Pancreas (tissue), 10 donors: ENCODE measurements at regions of chr9 and their contacts with region 1.

Region 1: GRCh38 chr9:76458903-76459690 is at the start of gene GCNT1:
- DNase-seq: peak; percentile 88 to 98 (median 92)
- ATAC-seq: peak; percentile 94 to 98 (median 96)
- H3K4me3 ChIP-seq: peak within 1 kb of the TSS; percentile 52 to 90 (median 74)
- H3K27ac ChIP-seq: peak within 1 kb of the TSS in 2 of 4 donors; percentile 48 to 56
- H3K4me1 ChIP-seq: peaks cover 4 to 23% (median 6%) of the 10 kb centered on the region in 3 donors
- H3K27me3 ChIP-seq: no peaks in the 10 kb centered on the region
- CTCF ChIP-seq: peak in 2 of 4 donors; percentile 20 to 23
- total RNA-seq, gene GCNT1: 1.7 to 5.7 (median 3.3) TPM

Region 2: GRCh38 chr9:76311586-76311985 is 147.5 kb before region 1 on chr9:
- intact Hi-C with region 1: no loop called
- DNase-seq: no peak
- ATAC-seq: peak in 2 of 4 donors; percentile 43 to 76
- H3K4me3 ChIP-seq: no peak overlapping the region
- H3K27ac ChIP-seq: peak overlapping the region in 1 of 4 donors; percentile 25
- H3K4me1 ChIP-seq: no peaks in the 10 kb centered on the region
- H3K27me3 ChIP-seq: no peaks in the 10 kb centered on the region
- CTCF ChIP-seq: no peak

Region 3: DNA sequence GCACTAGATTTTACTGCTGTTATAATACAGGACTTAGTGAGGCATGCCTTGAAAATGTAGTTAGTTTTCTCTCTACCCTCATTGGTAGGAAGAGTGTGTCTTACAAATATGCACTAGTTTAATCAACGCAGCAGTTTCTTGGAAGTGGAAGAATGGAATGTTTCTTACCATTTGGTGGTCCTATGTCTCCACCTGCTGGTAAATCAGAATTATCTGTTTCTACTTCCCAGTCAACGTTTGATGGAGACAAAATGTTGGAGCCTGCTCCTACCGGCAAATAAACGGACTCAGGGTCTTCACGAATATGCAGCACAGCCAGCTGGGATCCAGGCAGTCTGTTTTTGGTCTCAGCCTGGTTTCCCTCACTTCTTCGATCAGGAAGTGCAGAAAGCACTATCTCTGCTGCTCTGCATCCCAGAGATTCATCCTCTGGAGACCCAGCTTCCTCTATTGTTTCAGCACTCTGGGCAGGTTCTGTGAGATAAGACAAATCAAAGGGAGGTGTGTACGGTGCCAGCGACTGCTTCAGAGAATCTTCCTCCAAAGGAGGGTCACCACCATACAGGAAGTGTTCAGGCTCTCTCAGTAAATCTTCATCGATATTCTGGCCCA is 245.6 kb after region 1 on chr9:
- intact Hi-C with region 1: loop called in 1 of 3 experiments (anchors 10 kb)
- DNase-seq: peak in 1 of 6 donors; percentile 18
- ATAC-seq: peak in 3 of 4 donors; percentile 86 to 89 (median 89)
- H3K4me3 ChIP-seq: no peak overlapping the region
- H3K27ac ChIP-seq: no peak overlapping the region
- H3K4me1 ChIP-seq: no peaks in the 10 kb centered on the region
- H3K27me3 ChIP-seq: peaks cover 0 to 3% (median 2%) of the 10 kb centered on the region in 4 donors
- CTCF ChIP-seq: peak in 3 of 4 donors; percentile 25 to 57 (median 48)